ENCODE measurements at regions of chr3 and their contacts with region 1.

Region 1: DNA sequence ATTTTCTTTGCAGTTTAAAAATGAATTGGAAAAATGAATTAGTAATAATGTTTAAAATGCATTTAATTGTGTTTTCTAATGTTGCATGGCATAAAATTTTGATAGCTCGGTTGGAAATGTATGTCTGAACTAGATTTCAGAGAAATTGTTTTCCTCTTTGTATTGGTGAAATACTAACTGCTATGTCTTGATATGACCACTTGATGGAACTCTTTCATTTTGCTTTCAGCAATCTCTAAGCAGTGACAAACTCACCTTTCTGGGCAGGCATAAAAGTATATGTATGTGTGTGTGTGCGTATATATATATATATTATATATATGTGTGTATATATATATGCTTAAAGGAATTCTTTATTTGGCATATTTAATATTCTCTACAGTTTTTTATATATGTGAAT is 239.3 kb upstream of the ZNF717 start:
- DNase-seq: no peak
- H3K4me3 ChIP-seq: no peak overlapping the region
- H3K27ac ChIP-seq: no peak overlapping the region
- H3K4me1 ChIP-seq: no peaks in the 10 kb centered on the region
- H3K27me3 ChIP-seq: no peaks in the 10 kb centered on the region
- CTCF ChIP-seq: peak in 2 of 3 experiments; percentile 40 to 57; a peak in 2 of 4 replicates
- EP300 ChIP-seq: no peak
- POLR2A ChIP-seq: no peak
- RAD21 ChIP-seq: peak; percentile 83 to 84

Region 2: GRCh38 chr3:76034652-76035051 is 10.0 kb after region 1 on chr3:
- CTCF ChIA-PET with region 1: interaction called, 16 read pairs
- POLR2A ChIA-PET with region 1: no interaction called
- DNase-seq: no peak
- H3K4me3 ChIP-seq: no peak overlapping the region
- H3K27ac ChIP-seq: no peak overlapping the region
- H3K4me1 ChIP-seq: peaks cover 2 to 15% (median 11%) of the 10 kb centered on the region in 4 experiments; a peak in 6 of 7 replicates
- H3K27me3 ChIP-seq: no peaks in the 10 kb centered on the region
- CTCF ChIP-seq: no peak
- EP300 ChIP-seq: no peak
- POLR2A ChIP-seq: no peak
- RAD21 ChIP-seq: no peak

Measured in H1 (cell line).